ENCODE measurements at regions of chr12 and their contacts with region 1.

Region 1: GRCh38 chr12:52221912-52222457 is 11.1 kb upstream of the KRT7 start:
- DNase-seq: no peak
- ATAC-seq: peak; percentile 92
- H3K4me3 ChIP-seq: no peak overlapping the region
- H3K27ac ChIP-seq: no peak overlapping the region
- H3K4me1 ChIP-seq: peaks cover 6% of the 10 kb centered on the region; the same call in 1 of the 2 replicates
- H3K27me3 ChIP-seq: no peaks in the 10 kb centered on the region; a peak in 1 of 4 replicates
- CTCF ChIP-seq: peak; percentile 48 to 74 (median 67)
- EP300 ChIP-seq: no peak
- POLR2A ChIP-seq: no peak
- RAD21 ChIP-seq: peak; percentile 45

Region 2: GRCh38 chr12:52155960-52156735 is 65.8 kb before region 1 on chr12:
- CTCF ChIA-PET with region 1: no interaction called
- POLR2A ChIA-PET with region 1: no interaction called
- RAD21 ChIA-PET with region 1: no interaction called
- SMC1A ChIA-PET with region 1: no interaction called
- in situ Hi-C with region 1: no loop called
- intact Hi-C with region 1: no loop called
- DNase-seq: no peak
- ATAC-seq: no peak
- H3K4me3 ChIP-seq: no peak overlapping the region
- H3K27ac ChIP-seq: no peak overlapping the region
- H3K4me1 ChIP-seq: no peaks in the 10 kb centered on the region
- H3K27me3 ChIP-seq: no peaks in the 10 kb centered on the region; a peak in 1 of 4 replicates
- CTCF ChIP-seq: no peak
- EP300 ChIP-seq: no peak
- POLR2A ChIP-seq: no peak
- RAD21 ChIP-seq: no peak

Region 3: DNA sequence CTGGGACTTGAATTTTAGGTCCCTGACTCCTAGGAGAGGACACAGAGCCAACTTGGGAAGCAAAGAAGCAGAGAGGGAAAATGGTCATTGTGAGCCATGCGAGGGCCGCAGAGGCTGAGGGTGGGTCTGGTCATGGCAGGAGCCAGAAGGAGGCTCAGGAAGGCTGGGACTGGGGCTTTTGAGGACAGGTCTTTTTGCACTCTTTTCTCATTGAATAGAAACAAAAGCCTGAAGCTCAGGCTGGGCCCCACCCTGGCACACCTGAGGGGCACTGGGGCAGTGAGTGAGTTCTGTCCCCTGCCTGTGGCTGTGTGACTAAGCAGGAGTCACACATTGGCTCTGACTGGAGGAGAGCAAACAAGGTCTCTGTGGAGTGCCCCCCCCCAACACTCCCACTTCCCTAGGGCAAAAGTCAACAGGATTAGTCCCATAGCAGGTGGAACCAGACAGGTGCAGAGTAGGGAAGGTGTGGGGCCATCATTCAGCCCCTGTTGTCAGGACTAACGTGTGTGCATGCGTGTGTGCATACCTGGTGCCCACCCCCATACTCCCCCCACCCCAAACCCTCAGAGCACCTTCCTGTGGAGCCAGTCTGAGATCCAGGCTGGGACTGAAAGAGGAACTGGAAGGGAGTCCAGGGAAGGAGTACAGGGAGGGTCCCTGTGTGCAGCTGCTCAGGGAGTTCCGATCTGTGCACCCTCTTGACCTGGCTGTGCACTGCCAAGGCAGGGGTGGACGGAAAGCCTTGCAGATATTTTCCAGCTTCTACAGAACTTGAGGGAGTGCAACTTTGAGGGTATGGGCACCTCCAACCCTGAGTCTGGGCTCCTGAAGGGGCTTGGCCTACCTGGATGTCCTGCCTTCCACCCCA is 14.1 kb after region 1 on chr12:
- CTCF ChIA-PET with region 1: interaction called, 26 read pairs
- POLR2A ChIA-PET with region 1: no interaction called
- RAD21 ChIA-PET with region 1: interaction called, 4 read pairs
- SMC1A ChIA-PET with region 1: interaction called, 4 read pairs
- in situ Hi-C with region 1: no loop called
- intact Hi-C with region 1: no loop called
- DNase-seq: no peak
- ATAC-seq: no peak
- H3K4me3 ChIP-seq: no peak overlapping the region
- H3K27ac ChIP-seq: no peak overlapping the region
- H3K4me1 ChIP-seq: no peaks in the 10 kb centered on the region
- H3K27me3 ChIP-seq: peaks cover 4 to 12% of the 10 kb centered on the region in 2 experiments; a peak in 3 of 4 replicates
- CTCF ChIP-seq: no peak
- EP300 ChIP-seq: no peak
- POLR2A ChIP-seq: no peak
- RAD21 ChIP-seq: no peak

Region 4: DNA sequence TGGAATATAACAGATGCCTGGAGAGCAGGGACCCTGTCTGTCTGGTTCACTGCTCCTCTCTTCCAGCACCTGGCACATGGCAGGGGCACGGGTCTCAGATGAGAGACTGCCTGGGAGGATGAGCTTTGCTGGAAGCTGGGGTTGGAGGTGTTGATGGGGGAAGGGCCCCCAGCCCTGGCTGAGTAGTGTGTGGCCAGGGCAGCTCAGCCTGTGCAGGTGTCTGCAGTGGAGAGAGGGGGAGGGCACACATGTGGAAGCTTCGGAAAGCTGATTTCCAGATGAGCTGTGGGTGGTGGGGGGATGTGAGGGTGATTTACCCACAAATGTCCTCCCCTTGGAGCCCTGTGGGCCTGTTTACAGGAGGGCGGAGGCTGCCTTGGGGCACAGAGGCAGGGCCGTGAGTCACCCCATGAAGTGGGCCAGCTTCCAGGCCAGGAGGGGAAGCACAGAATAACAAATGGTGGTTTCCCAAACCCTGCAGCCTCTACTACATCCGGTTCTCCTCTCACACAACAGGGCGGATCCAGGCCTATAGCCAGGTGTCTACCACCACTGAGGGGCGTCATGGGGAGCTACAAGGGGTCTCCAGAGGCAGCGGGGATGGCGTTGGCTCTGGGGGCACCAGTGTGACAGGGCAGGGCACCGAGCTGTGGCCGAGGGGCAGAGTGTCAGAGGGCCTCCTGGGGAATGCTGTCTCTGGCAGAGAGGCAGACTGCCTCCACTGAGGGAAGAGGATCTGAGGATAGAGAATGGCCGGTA is 22.1 kb after region 1 on chr12:
- CTCF ChIA-PET with region 1: interaction called, 26 read pairs
- POLR2A ChIA-PET with region 1: no interaction called
- RAD21 ChIA-PET with region 1: no interaction called
- SMC1A ChIA-PET with region 1: interaction called, 13 read pairs
- in situ Hi-C with region 1: no loop called
- intact Hi-C with region 1: no loop called
- DNase-seq: peak; percentile 66
- ATAC-seq: peak; percentile 93
- H3K4me3 ChIP-seq: peak overlapping the region; percentile 42; the same call in 1 of the 2 replicates
- H3K27ac ChIP-seq: peak overlapping the region; percentile 86
- H3K4me1 ChIP-seq: peaks cover 22% of the 10 kb centered on the region
- H3K27me3 ChIP-seq: no peaks in the 10 kb centered on the region
- CTCF ChIP-seq: 0 out of 6 replicates have a peak, but pooled peaks of 1 of the 3 experiments have one; percentile 14
- EP300 ChIP-seq: 0 out of 4 replicates have a peak, but pooled peaks of 1 of the 2 experiments have one; percentile 28
- POLR2A ChIP-seq: peak; percentile 77
- RAD21 ChIP-seq: no peak